Lower leg skin (tissue), 4 donors: ENCODE measurements at regions of chr3 and their contacts with region 1.

Region 1: GRCh38 chr3:132034486-132035464 is at the start of gene CPNE4:
- DNase-seq: peak; percentile 47 to 93
- H3K4me3 ChIP-seq: no peak within 1 kb of the TSS
- CTCF ChIP-seq: no peak
- POLR2A ChIP-seq: no peak
- total RNA-seq, gene CPNE4: 0.10 to 0.25 (median 0.16) TPM in 3 of 4 donors, not detected in the other

Region 2: GRCh38 chr3:131794766-131795388 is 239.9 kb before region 1 on chr3:
- intact Hi-C with region 1: loop called (anchors 10 kb)
- DNase-seq: peak in 1 of 2 donors; percentile 21
- H3K4me3 ChIP-seq: no peak overlapping the region
- CTCF ChIP-seq: no peak
- POLR2A ChIP-seq: no peak

Region 3: GRCh38 chr3:132399054-132399929 is 364.5 kb after region 1 on chr3:
- intact Hi-C with region 1: loop called (anchors 5 kb)
- DNase-seq: no peak
- H3K4me3 ChIP-seq: no peak overlapping the region
- CTCF ChIP-seq: no peak
- POLR2A ChIP-seq: no peak